ENCODE measurements at regions of chr6 and their contacts with region 1.

Region 1: GRCh38 chr6:52361945-52362442 is at the start of gene PAQR8:
- DNase-seq: peak; percentile 10
- ATAC-seq: peak; percentile 95
- H3K4me3 ChIP-seq: peak within 1 kb of the TSS; percentile 88 to 92
- H3K27ac ChIP-seq: peak within 1 kb of the TSS; percentile 52; the same call in 1 of the 2 replicates
- H3K4me1 ChIP-seq: peaks cover 3 to 19% of the 10 kb centered on the region in 2 experiments; a peak in 3 of 4 replicates
- H3K27me3 ChIP-seq: no peaks in the 10 kb centered on the region
- CTCF ChIP-seq: no peak
- POLR2A ChIP-seq: peak; percentile 86
- RAD21 ChIP-seq: no peak
- total RNA-seq, gene PAQR8: 5.9 TPM

Region 2: DNA sequence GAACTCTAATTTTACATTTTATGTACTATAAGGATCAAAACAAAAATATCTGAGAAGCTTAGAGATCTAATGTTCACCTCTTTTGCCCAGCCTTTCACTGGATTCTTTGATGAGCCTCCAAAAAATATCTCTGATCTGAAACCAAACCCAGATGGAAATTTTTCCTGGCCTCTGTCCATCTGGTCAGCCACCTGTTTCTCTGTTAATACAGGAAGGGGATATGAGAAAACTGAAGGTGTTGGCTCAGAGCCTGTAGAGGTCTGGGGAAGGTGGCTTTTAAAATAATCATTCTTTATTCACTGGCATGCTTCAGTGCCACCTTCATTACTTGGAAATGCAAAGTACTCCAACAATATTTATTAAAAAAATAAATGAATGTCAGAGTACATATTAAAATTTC is 68.9 kb before region 1 on chr6:
- CTCF ChIA-PET with region 1: no interaction called
- POLR2A ChIA-PET with region 1: no interaction called
- RAD21 ChIA-PET with region 1: interaction called in 1 of 2 experiments, 3 read pairs
- intact Hi-C with region 1: loop called (anchors 2 kb)
- DNase-seq: no peak
- ATAC-seq: no peak
- H3K4me3 ChIP-seq: no peak overlapping the region
- H3K27ac ChIP-seq: no peak overlapping the region
- H3K4me1 ChIP-seq: no peaks in the 10 kb centered on the region; a peak in 1 of 4 replicates
- H3K27me3 ChIP-seq: no peaks in the 10 kb centered on the region
- CTCF ChIP-seq: no peak
- POLR2A ChIP-seq: no peak
- RAD21 ChIP-seq: no peak

Region 3: DNA sequence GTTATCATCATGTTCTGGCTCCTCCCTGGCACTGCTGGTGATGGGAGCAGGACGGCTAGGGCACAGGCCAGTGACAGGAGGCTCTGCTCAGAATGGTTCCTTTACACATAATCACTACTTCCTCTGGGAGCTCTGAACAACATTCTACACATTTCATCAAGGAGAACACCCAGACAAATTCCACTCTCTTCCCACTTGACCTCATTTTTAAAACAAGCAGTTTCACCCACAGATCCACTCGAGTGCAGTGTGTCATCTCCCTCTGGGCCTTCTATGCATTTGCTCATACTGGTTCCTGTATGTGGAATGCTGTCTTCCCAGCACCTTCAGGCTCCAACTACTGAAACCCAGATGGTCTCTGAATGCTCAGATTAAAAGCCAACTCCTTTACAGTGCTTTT is 901.9 kb after region 1 on chr6:
- CTCF ChIA-PET with region 1: no interaction called
- POLR2A ChIA-PET with region 1: no interaction called
- RAD21 ChIA-PET with region 1: no interaction called
- intact Hi-C with region 1: no loop called
- DNase-seq: no peak
- ATAC-seq: no peak
- H3K4me3 ChIP-seq: no peak overlapping the region
- H3K27ac ChIP-seq: no peak overlapping the region
- H3K4me1 ChIP-seq: no peaks in the 10 kb centered on the region
- H3K27me3 ChIP-seq: no peaks in the 10 kb centered on the region
- CTCF ChIP-seq: no peak
- POLR2A ChIP-seq: no peak
- RAD21 ChIP-seq: no peak

Measured in HCT116 (cell line).